CD4-positive, alpha-beta memory T cell (primary cell): ENCODE measurements at regions of chr1 and their contacts with region 1.

Region 1: GRCh38 chr1:158124999-158125398 is 55.7 kb upstream of the CD1D start:
- DNase-seq: peak; percentile 44 to 65 (median 57)
- H3K4me3 ChIP-seq: no peak overlapping the region
- H3K4me3 Mint-ChIP-seq: no peak overlapping the region
- H3K27ac ChIP-seq: no peak overlapping the region
- H3K27ac Mint-ChIP-seq: no peak overlapping the region
- H3K4me1 ChIP-seq: no peaks in the 10 kb centered on the region
- H3K4me1 Mint-ChIP-seq: peaks cover 0 to 3% (median 1%) of the 10 kb centered on the region in 4 donors
- H3K27me3 ChIP-seq: peaks cover 4% of the 10 kb centered on the region
- H3K27me3 Mint-ChIP-seq: peaks cover 17 to 19% of the 10 kb centered on the region in 2 donors

Region 2: GRCh38 chr1:157580179-157580827 is 544.7 kb before region 1 on chr1:
- CTCF ChIA-PET with region 1: interaction called, 42 read pairs
- POLR2A ChIA-PET with region 1: interaction called, 3 read pairs
- intact Hi-C with region 1: no loop called
- DNase-seq: peak; percentile 21 to 32 (median 26)
- H3K4me3 ChIP-seq: no peak overlapping the region
- H3K4me3 Mint-ChIP-seq: no peak overlapping the region
- H3K27ac ChIP-seq: no peak overlapping the region
- H3K27ac Mint-ChIP-seq: no peak overlapping the region
- H3K4me1 ChIP-seq: no peaks in the 10 kb centered on the region
- H3K4me1 Mint-ChIP-seq: no peaks in the 10 kb centered on the region
- H3K27me3 ChIP-seq: no peaks in the 10 kb centered on the region
- H3K27me3 Mint-ChIP-seq: peaks cover 7 to 8% of the 10 kb centered on the region in 2 donors

Region 3: DNA sequence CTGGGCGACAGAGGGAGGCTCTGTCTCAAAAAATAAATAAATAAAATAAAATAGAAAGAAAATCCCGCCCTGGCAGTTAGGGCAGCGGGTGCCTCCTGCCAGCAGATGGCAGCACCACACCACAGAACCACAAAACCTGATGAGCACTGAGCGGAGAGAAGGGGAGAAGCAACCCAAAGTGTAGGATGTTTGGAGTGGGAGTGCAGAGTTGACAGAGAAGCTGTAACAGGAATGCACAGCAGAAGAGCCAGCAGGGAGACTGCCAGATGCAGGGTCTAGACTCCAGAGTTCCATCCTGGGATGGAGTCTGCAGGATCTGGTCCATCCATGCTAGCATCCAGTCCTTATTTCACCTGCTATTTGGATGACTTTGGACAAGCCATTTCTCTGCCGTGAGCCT is 161.3 kb before region 1 on chr1:
- CTCF ChIA-PET with region 1: interaction called, 36 read pairs
- POLR2A ChIA-PET with region 1: no interaction called
- intact Hi-C with region 1: loop called (anchors 1 kb)
- DNase-seq: peak in 4 of 5 donors; percentile 9 to 36 (median 24)
- H3K4me3 ChIP-seq: no peak overlapping the region
- H3K4me3 Mint-ChIP-seq: no peak overlapping the region
- H3K27ac ChIP-seq: no peak overlapping the region
- H3K27ac Mint-ChIP-seq: no peak overlapping the region
- H3K4me1 ChIP-seq: no peaks in the 10 kb centered on the region
- H3K4me1 Mint-ChIP-seq: peaks cover 0 to 1% (median 0%) of the 10 kb centered on the region in 4 donors
- H3K27me3 ChIP-seq: no peaks in the 10 kb centered on the region
- H3K27me3 Mint-ChIP-seq: peaks cover 7 to 35% of the 10 kb centered on the region in 2 donors

Region 4: DNA sequence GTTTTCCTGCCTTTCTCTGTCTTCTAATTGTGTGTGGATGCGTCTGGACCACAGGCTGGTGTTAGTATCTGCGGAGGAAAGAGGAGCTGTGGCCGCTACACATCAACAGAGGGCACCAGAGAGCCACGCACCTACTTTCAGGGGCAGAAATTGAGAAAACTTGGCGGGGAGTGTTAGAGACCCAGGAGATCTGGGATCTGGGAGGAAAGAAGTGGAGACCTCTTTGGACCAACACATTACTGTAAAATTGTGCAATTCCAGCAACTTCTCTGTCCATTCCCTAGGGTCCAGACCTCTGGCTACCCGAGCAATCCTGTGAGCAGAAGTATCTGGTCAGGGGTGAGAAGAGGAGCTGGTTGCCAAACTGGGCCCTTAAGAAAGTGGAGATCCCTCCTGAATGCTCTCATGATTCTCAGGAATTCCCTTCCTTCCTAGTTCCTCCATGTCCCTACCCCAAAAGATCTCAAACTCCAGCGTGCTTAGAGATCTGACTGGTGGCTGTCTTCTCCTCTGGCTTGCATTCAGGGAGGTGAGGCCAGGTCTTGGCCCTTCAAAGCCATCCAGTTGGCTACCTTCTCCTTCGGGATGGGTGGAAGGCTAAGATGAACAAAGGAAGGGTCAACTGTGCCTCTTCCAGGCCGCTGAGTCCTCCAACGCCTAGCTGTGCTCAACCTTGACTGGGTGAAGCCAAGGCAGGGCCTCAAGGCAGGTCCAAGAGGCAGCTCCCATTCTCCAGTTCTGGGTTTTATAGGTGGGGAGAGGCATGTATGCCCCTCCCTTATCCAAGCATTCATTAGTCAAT is 132.8 kb before region 1 on chr1:
- CTCF ChIA-PET with region 1: interaction called, 39 read pairs
- POLR2A ChIA-PET with region 1: no interaction called
- intact Hi-C with region 1: loop called (anchors 2 kb)
- DNase-seq: peak in 3 of 5 donors; percentile 6 to 24 (median 13)
- H3K4me3 ChIP-seq: no peak overlapping the region
- H3K4me3 Mint-ChIP-seq: peak overlapping the region in 3 of 8 donors; percentile 1 to 80 (median 70)
- H3K27ac ChIP-seq: no peak overlapping the region
- H3K27ac Mint-ChIP-seq: no peak overlapping the region
- H3K4me1 ChIP-seq: no peaks in the 10 kb centered on the region
- H3K4me1 Mint-ChIP-seq: peaks cover 0 to 18% (median 6%) of the 10 kb centered on the region in 4 donors
- H3K27me3 ChIP-seq: peaks cover 10% of the 10 kb centered on the region
- H3K27me3 Mint-ChIP-seq: peaks cover 20 to 25% of the 10 kb centered on the region in 2 donors

Region 5: DNA sequence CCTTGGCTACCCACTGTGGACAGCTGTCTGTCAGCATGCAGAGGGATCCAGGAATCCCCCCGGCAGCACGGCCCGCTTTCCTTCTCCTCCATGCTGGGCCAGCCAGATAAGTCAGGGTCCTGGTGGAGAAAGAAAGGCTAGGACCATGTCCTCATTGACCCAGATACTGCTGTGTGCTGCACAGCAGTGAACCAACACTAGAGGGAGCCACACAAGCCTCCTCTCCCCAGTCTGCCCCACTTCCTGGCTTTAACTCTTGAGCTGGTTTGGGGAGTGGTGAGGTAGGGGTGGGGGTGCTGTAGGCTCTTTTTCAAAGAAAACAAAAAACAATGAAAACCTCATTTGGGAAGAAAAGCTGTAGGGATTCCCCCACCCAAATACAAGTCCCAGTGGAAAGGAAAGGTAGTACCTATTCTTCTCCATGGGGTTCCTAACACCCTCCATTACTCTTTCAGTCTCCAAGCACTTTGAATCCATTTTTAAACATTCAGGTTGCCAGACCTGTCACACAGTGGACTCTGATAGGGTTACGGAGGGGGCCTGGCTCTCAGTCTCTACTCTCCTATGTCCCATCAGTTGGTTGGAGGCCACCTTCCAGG is 29.2 kb before region 1 on chr1:
- CTCF ChIA-PET with region 1: interaction called, 89 read pairs
- POLR2A ChIA-PET with region 1: no interaction called
- intact Hi-C with region 1: loop called (anchors 2 kb)
- DNase-seq: peak in 3 of 5 donors; percentile 9 to 14 (median 10)
- H3K4me3 ChIP-seq: no peak overlapping the region
- H3K4me3 Mint-ChIP-seq: no peak overlapping the region
- H3K27ac ChIP-seq: no peak overlapping the region
- H3K27ac Mint-ChIP-seq: no peak overlapping the region
- H3K4me1 ChIP-seq: no peaks in the 10 kb centered on the region
- H3K4me1 Mint-ChIP-seq: no peaks in the 10 kb centered on the region
- H3K27me3 ChIP-seq: no peaks in the 10 kb centered on the region
- H3K27me3 Mint-ChIP-seq: peaks cover 3 to 10% of the 10 kb centered on the region in 2 donors

Region 6: DNA sequence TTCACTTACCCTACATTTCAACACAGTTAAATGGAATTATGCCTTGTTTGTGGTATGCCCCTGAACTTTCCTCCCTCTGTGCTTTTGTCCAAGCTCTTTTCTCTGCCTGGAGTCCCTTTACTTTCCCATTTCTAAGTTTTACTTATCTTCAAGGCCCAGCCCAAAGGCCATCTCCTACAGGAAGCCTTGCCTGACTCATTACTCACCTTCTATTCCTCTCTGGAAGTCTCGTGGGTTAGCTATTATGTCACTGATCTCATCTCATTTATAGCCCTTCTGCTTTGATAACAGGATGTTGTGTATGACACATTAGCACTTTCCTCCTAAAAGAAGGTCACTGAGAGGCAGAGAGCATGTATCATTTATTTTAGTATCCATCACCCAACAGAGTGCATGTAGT is 23.1 kb before region 1 on chr1:
- CTCF ChIA-PET with region 1: interaction called, 89 read pairs
- POLR2A ChIA-PET with region 1: no interaction called
- intact Hi-C with region 1: loop called (anchors 2 kb)
- DNase-seq: no peak
- H3K4me3 ChIP-seq: no peak overlapping the region
- H3K4me3 Mint-ChIP-seq: no peak overlapping the region
- H3K27ac ChIP-seq: no peak overlapping the region
- H3K27ac Mint-ChIP-seq: no peak overlapping the region
- H3K4me1 ChIP-seq: no peaks in the 10 kb centered on the region
- H3K4me1 Mint-ChIP-seq: no peaks in the 10 kb centered on the region
- H3K27me3 ChIP-seq: no peaks in the 10 kb centered on the region
- H3K27me3 Mint-ChIP-seq: peaks cover 5% of the 10 kb centered on the region in 2 donors